Posterior cingulate gyrus (tissue), 11 donors: ENCODE measurements at regions of chr9 and their contacts with region 1.

Region 1: GRCh38 chr9:129110740-129111527 is at the starts of genes CRAT and PTPA:
- DNase-seq: peak; percentile 93 to 99 (median 97)

Region 2: DNA sequence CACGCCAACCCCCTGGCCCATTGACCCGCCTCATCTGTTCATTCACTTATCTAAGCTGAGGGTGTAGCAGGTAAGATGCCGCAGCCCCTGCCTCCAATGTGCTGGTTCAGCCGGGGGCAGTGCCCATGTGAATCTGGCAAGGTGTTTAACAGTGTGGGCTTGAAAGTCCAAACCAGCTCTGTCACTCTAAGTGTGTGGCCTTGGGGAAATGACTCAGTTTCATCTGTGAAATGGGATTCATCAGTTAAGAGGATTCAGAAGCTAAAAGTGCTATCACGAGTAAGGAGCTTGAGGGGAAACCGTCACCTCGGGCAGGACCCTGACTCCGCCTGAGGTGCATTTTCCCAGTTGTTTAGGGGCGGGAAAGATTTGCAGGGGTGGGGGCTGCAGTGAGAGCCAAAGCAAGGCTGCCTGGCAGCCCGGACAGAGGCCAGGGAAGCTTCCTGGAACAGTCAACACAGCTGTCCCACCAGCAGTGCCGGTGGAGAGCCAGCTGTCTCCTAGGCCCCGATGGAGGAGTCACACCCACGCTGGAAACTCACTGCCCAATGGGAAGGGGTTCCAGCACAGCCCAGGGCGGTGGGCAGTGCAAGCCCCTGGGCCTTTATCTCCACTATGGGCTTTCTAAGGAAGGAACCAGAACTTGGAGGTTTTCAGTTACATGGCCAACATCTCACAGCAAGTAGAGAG is 749.5 kb before region 1 on chr9:
- intact Hi-C with region 1: no loop called
- DNase-seq: peak in 1 of 10 donors; percentile 85

Region 3: GRCh38 chr9:129028192-129028957 is 82.6 kb before region 1 on chr9 and contains the start of gene SH3GLB2:
- intact Hi-C with region 1: loop called (anchors 5 kb)
- DNase-seq: peak; percentile 96 to 100 (median 98)

Region 4: GRCh38 chr9:129307227-129307970 is 196.5 kb after region 1 on chr9:
- intact Hi-C with region 1: no loop called
- DNase-seq: peak in 3 of 10 donors; percentile 1 to 8 (median 3)